Vagina (tissue), 2 donors: ENCODE measurements at regions of chr15 and their contacts with region 1.

Region 1: GRCh38 chr15:36050899-36051298 is 504.9 kb upstream of the DPH6 start:
- DNase-seq: no peak
- H3K4me3 ChIP-seq: no peak overlapping the region
- H3K27ac ChIP-seq: no peak overlapping the region
- H3K4me1 ChIP-seq: no peaks in the 10 kb centered on the region
- H3K27me3 ChIP-seq: no peaks in the 10 kb centered on the region
- CTCF ChIP-seq: no peak
- POLR2A ChIP-seq: no peak

Region 2: GRCh38 chr15:36251450-36251849 is 200.6 kb after region 1 on chr15:
- intact Hi-C with region 1: no loop called
- DNase-seq: no peak
- H3K4me3 ChIP-seq: no peak overlapping the region
- H3K27ac ChIP-seq: no peak overlapping the region
- H3K4me1 ChIP-seq: no peaks in the 10 kb centered on the region
- H3K27me3 ChIP-seq: no peaks in the 10 kb centered on the region
- CTCF ChIP-seq: no peak
- POLR2A ChIP-seq: no peak

Region 3: GRCh38 chr15:36389107-36389506 is 338.2 kb after region 1 on chr15:
- intact Hi-C with region 1: no loop called
- DNase-seq: no peak
- H3K4me3 ChIP-seq: no peak overlapping the region
- H3K27ac ChIP-seq: no peak overlapping the region
- H3K4me1 ChIP-seq: no peaks in the 10 kb centered on the region
- H3K27me3 ChIP-seq: no peaks in the 10 kb centered on the region
- CTCF ChIP-seq: no peak
- POLR2A ChIP-seq: no peak

Region 4: GRCh38 chr15:37339856-37340255 is 1289.0 kb after region 1 on chr15:
- intact Hi-C with region 1: loop called (anchors 5 kb)
- DNase-seq: no peak
- H3K4me3 ChIP-seq: no peak overlapping the region
- H3K27ac ChIP-seq: no peak overlapping the region
- H3K4me1 ChIP-seq: no peaks in the 10 kb centered on the region
- H3K27me3 ChIP-seq: no peaks in the 10 kb centered on the region
- CTCF ChIP-seq: no peak
- POLR2A ChIP-seq: no peak